WTC11 (cell line): ENCODE measurements at regions of chr1 and their contacts with region 1.

Region 1: DNA sequence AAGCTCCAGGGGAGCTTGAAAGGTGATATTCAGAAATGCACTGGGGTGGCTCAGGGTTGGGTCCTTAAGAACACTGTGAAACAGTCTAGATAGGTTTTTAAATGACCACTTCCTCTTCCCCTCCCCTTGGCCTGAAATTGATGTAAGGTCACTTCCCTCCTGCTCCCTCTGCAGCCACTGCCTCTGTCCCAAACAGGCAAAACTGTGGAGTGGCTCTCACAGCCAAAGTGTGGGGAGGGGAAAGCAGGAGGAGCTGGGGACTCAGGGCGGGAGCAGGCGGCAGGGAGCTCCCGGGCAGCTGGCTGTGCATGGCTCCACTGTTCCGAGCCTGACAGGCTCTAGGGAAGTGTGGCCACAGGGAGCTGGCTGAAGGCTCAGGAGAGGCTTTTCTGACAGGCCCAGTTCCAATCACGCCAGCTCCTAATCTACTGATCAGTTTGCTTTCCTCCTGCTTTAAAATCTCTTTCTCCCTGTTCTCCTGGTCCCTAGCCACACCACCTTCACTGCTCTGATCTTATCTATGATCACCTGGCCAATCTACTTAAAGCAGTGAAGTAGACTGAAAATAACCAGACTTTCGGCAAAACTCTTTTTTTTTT is 5.1 kb upstream of the CSRP1 start:
- DNase-seq: peak; percentile 69
- ATAC-seq: peak; percentile 81
- H3K4me3 Mint-ChIP-seq: 0 out of 2 replicates have a peak overlapping the region, but pooled peaks have one; percentile 29
- H3K27ac Mint-ChIP-seq: peak overlapping the region; percentile 78; the same call in 1 of the 2 replicates
- H3K4me1 Mint-ChIP-seq: peaks cover 25% of the 10 kb centered on the region
- H3K27me3 Mint-ChIP-seq: peaks cover 25% of the 10 kb centered on the region
- CTCF ChIP-seq: no peak

Region 2: GRCh38 chr1:201268604-201269151 is 243.4 kb before region 1 on chr1:
- CTCF ChIA-PET with region 1: no interaction called
- POLR2A ChIA-PET with region 1: no interaction called
- DNase-seq: no peak
- ATAC-seq: no peak
- H3K4me3 Mint-ChIP-seq: no peak overlapping the region
- H3K27ac Mint-ChIP-seq: no peak overlapping the region
- H3K4me1 Mint-ChIP-seq: 0 out of 2 replicates have a peak, but pooled peaks cover 4% of the 10 kb centered on the region
- H3K27me3 Mint-ChIP-seq: no peaks in the 10 kb centered on the region
- CTCF ChIP-seq: no peak

Region 3: GRCh38 chr1:201436393-201436792 is 75.6 kb before region 1 on chr1:
- CTCF ChIA-PET with region 1: interaction called, 65 read pairs
- POLR2A ChIA-PET with region 1: no interaction called
- DNase-seq: peak; percentile 72
- ATAC-seq: peak; percentile 97
- H3K4me3 Mint-ChIP-seq: no peak overlapping the region; the same call in 1 of the 2 replicates
- H3K27ac Mint-ChIP-seq: no peak overlapping the region; the same call in 1 of the 2 replicates
- H3K4me1 Mint-ChIP-seq: peaks cover 19% of the 10 kb centered on the region
- H3K27me3 Mint-ChIP-seq: no peaks in the 10 kb centered on the region; the same call in 1 of the 2 replicates
- CTCF ChIP-seq: no peak

Region 4: GRCh38 chr1:201468844-201469511 is 43.1 kb before region 1 on chr1 and contains the start of gene PHLDA3:
- CTCF ChIA-PET with region 1: interaction called, 27 read pairs
- POLR2A ChIA-PET with region 1: no interaction called
- DNase-seq: peak; percentile 85
- ATAC-seq: peak; percentile 68
- H3K4me3 Mint-ChIP-seq: peak within 1 kb of the TSS; percentile 90
- H3K27ac Mint-ChIP-seq: no peak within 1 kb of the TSS; the same call in 1 of the 2 replicates
- H3K4me1 Mint-ChIP-seq: peaks cover 30% of the 10 kb centered on the region
- H3K27me3 Mint-ChIP-seq: peaks cover 40% of the 10 kb centered on the region
- CTCF ChIP-seq: no peak
- total RNA-seq, gene PHLDA3: 53.9 to 95.1 TPM (median 59.7 TPM) in 3 replicates

Region 5: GRCh38 chr1:201530741-201531531 is 18.9 kb after region 1 on chr1:
- CTCF ChIA-PET with region 1: interaction called, 55 read pairs
- POLR2A ChIA-PET with region 1: interaction called, 4 read pairs
- DNase-seq: peak; percentile 90
- ATAC-seq: peak; percentile 96
- H3K4me3 Mint-ChIP-seq: no peak overlapping the region
- H3K27ac Mint-ChIP-seq: 0 out of 2 replicates have a peak overlapping the region, but pooled peaks have one; percentile 50
- H3K4me1 Mint-ChIP-seq: peaks cover 23% of the 10 kb centered on the region
- H3K27me3 Mint-ChIP-seq: 0 out of 2 replicates have a peak, but pooled peaks cover under 1% of the 10 kb centered on the region
- CTCF ChIP-seq: peak; percentile 62

Region 6: GRCh38 chr1:201649761-201650622 is 138.0 kb after region 1 on chr1:
- CTCF ChIA-PET with region 1: interaction called, 16 read pairs
- POLR2A ChIA-PET with region 1: no interaction called
- DNase-seq: peak; percentile 92
- ATAC-seq: peak; percentile 46
- H3K4me3 Mint-ChIP-seq: peak overlapping the region; percentile 79
- H3K27ac Mint-ChIP-seq: peak overlapping the region; percentile 82; the same call in 1 of the 2 replicates
- H3K4me1 Mint-ChIP-seq: peaks cover 55% of the 10 kb centered on the region
- H3K27me3 Mint-ChIP-seq: peaks cover 17% of the 10 kb centered on the region
- CTCF ChIP-seq: no peak

Region 7: GRCh38 chr1:201792534-201793305 is 280.7 kb after region 1 on chr1:
- CTCF ChIA-PET with region 1: interaction called, 16 read pairs
- POLR2A ChIA-PET with region 1: no interaction called
- DNase-seq: peak; percentile 85
- ATAC-seq: peak; percentile 96
- H3K4me3 Mint-ChIP-seq: no peak overlapping the region
- H3K27ac Mint-ChIP-seq: no peak overlapping the region
- H3K4me1 Mint-ChIP-seq: no peaks in the 10 kb centered on the region
- H3K27me3 Mint-ChIP-seq: no peaks in the 10 kb centered on the region
- CTCF ChIP-seq: peak; percentile 82